CD8-positive, alpha-beta memory T cell (primary cell): ENCODE measurements at regions of chr6 and their contacts with region 1.

Region 1: DNA sequence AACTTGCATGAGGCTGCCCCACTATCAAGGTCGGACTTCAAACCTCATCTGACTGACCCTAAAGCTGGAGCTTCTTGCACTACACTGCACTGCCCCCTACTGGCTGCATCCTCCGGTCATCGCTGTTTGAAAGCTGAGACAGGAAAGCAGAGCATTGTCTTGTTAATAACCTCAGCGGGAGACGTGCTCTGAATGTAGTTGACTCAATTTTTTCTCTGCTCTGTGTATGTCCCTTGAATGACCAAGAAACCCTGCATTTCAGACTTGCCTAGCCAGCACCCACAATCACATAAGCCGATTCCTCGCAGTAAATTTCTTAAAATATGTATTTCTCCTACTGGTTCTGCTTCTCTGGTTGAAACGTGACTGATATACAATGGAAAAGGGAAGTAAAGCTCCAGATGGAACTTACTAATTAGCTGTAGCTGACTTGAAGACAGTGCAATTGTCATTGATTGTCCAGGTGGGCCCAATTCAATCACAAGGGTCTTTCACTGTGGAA is 27.8 kb downstream of the TCF21 start:
- DNase-seq: peak; percentile 26 to 71 (median 60)
- H3K4me3 ChIP-seq: no peak overlapping the region
- H3K4me3 Mint-ChIP-seq: peak overlapping the region in 2 of 7 donors; percentile 23 to 41
- H3K27ac ChIP-seq: no peak overlapping the region
- H3K27ac Mint-ChIP-seq: no peak overlapping the region
- H3K4me1 ChIP-seq: no peaks in the 10 kb centered on the region
- H3K4me1 Mint-ChIP-seq: peaks cover 3 to 5% (median 5%) of the 10 kb centered on the region in 3 donors
- H3K27me3 ChIP-seq: no peaks in the 10 kb centered on the region
- H3K27me3 Mint-ChIP-seq: peaks cover 12 to 23% of the 10 kb centered on the region in 2 donors

Region 2: GRCh38 chr6:133906050-133906449 is 10.7 kb before region 1 on chr6:
- CTCF ChIA-PET with region 1: interaction called, 12 read pairs
- POLR2A ChIA-PET with region 1: no interaction called
- DNase-seq: no peak
- H3K4me3 ChIP-seq: no peak overlapping the region
- H3K4me3 Mint-ChIP-seq: no peak overlapping the region
- H3K27ac ChIP-seq: no peak overlapping the region
- H3K27ac Mint-ChIP-seq: no peak overlapping the region
- H3K4me1 ChIP-seq: no peaks in the 10 kb centered on the region
- H3K4me1 Mint-ChIP-seq: no peaks in the 10 kb centered on the region
- H3K27me3 ChIP-seq: peaks cover 5% of the 10 kb centered on the region
- H3K27me3 Mint-ChIP-seq: peaks cover 32 to 79% of the 10 kb centered on the region in 2 donors